WTC11 (cell line): ENCODE measurements at regions of chr17 and their contacts with region 1.

Region 1: GRCh38 chr17:29777663-29778062 is 152.4 kb downstream of the SSH2 start:
- DNase-seq: no peak
- ATAC-seq: no peak
- H3K4me3 Mint-ChIP-seq: no peak overlapping the region
- H3K27ac Mint-ChIP-seq: no peak overlapping the region
- H3K4me1 Mint-ChIP-seq: no peaks in the 10 kb centered on the region
- H3K27me3 Mint-ChIP-seq: no peaks in the 10 kb centered on the region
- CTCF ChIP-seq: no peak

Region 2: DNA sequence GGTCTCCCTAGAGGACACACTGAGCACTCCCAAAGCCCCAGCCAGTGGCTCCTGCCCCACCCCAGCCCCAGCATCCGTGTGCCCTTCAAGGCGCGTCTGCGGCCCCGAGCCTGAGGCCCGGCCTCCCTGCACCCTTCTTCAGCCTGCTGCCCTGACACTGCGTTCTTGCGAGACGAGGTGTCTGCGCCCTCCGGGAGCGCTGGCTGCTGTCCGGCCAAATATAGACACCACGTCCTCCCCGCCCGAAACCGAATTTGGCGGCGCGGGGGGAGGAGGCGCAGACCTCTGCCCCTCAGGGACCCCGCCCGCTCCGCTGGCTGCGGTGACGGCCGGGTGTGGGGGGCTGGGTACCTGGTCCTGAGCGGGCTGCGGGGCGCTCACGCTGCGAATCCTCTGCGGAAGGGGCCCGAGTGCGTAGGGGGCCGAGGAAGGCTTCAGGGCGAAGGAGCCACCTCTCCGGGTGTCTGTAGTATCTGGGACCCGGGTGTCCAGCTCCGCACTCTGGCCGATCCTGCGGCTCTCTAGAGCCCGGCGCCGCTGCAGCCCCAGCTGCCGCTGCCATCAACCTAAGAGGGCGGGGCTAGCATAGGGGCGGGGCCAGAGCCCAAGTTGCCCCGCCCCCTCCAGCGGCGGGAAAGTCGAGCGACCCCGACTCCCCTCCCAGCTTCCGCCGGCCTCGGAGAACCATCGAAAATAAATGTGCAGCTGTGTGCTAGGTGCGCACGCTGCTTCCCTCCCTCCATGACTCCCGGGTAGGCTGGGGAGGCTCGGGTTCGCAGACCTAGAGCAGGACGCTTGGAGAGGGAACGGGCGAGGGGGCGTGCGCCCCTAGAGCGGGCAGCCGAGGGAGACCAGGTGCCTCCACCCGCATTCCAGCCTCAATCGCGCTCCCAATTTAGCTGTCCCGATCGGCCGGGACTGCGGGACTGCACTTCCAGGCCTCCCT is 155.1 kb before region 1 on chr17 and contains the start of gene CORO6:
- CTCF ChIA-PET with region 1: interaction called, 34 read pairs
- POLR2A ChIA-PET with region 1: interaction called, 11 read pairs
- DNase-seq: peak; percentile 86
- ATAC-seq: peak; percentile 58
- H3K4me3 Mint-ChIP-seq: peak within 1 kb of the TSS; percentile 79
- H3K27ac Mint-ChIP-seq: peak within 1 kb of the TSS; percentile 82
- H3K4me1 Mint-ChIP-seq: peaks cover 48% of the 10 kb centered on the region
- H3K27me3 Mint-ChIP-seq: peaks cover 65% of the 10 kb centered on the region
- CTCF ChIP-seq: no peak
- total RNA-seq, gene CORO6: 6.4 to 8.9 TPM (median 7.5 TPM) in 3 replicates

Region 3: DNA sequence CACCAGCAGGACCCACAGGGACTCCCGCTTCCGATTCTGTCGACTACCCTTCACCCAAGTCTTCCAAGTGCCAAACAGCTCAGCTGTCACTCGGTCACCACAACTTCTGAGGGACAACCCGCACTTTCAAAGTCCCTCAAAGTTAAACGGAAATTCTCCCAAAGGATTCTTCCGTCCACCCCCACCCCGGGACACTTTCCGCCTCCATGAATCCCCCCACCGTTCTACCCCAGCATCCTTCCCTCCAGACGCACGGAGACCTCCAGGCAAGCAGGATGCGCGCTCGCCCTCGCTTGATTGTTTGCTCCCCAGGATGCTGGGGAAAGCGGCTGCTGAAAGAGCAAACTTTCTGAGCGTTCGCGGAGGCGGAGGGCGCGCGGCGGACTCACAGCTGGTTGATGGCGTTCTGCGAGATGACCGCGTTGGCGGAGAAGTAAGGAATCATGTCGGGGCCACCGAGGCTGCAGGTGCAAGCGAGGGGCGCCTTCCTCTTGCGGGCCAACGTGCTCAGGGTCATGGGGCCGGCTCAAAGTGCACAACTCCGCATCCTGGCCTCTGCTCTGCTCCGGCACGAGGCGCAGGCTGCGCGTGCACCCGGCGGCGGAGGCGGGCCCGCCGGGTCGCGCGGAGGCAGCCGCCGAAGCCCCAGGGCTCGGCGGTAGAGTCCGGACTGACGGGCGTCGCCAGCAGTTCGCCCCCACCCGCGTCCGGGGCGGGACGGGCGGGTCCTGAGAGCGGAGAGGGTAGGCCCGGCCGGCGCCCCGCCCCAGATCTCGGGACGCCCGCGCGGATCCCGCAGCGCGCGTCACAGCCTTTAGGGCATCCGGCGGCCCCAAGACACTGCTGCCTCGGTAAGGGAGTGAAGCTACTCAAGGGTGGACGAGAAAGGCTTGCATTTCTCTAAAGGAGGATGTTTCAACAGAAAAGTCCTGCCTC is 16.6 kb before region 1 on chr17:
- CTCF ChIA-PET with region 1: interaction called, 20 read pairs
- POLR2A ChIA-PET with region 1: interaction called, 4 read pairs
- DNase-seq: peak; percentile 77
- ATAC-seq: peak; percentile 89
- H3K4me3 Mint-ChIP-seq: peak overlapping the region; percentile 83
- H3K27ac Mint-ChIP-seq: no peak overlapping the region; the same call in 1 of the 2 replicates
- H3K4me1 Mint-ChIP-seq: peaks cover 14% of the 10 kb centered on the region
- H3K27me3 Mint-ChIP-seq: peaks cover 21% of the 10 kb centered on the region
- CTCF ChIP-seq: no peak

Region 4: GRCh38 chr17:29789196-29790170 is 11.8 kb after region 1 on chr17:
- CTCF ChIA-PET with region 1: interaction called, 10 read pairs
- POLR2A ChIA-PET with region 1: interaction called, 3 read pairs
- DNase-seq: no peak
- ATAC-seq: no peak; the same call in 1 of the 2 replicates
- H3K4me3 Mint-ChIP-seq: no peak overlapping the region
- H3K27ac Mint-ChIP-seq: no peak overlapping the region; the same call in 1 of the 2 replicates
- H3K4me1 Mint-ChIP-seq: peaks cover 40% of the 10 kb centered on the region
- H3K27me3 Mint-ChIP-seq: no peaks in the 10 kb centered on the region
- CTCF ChIP-seq: no peak

Region 5: DNA sequence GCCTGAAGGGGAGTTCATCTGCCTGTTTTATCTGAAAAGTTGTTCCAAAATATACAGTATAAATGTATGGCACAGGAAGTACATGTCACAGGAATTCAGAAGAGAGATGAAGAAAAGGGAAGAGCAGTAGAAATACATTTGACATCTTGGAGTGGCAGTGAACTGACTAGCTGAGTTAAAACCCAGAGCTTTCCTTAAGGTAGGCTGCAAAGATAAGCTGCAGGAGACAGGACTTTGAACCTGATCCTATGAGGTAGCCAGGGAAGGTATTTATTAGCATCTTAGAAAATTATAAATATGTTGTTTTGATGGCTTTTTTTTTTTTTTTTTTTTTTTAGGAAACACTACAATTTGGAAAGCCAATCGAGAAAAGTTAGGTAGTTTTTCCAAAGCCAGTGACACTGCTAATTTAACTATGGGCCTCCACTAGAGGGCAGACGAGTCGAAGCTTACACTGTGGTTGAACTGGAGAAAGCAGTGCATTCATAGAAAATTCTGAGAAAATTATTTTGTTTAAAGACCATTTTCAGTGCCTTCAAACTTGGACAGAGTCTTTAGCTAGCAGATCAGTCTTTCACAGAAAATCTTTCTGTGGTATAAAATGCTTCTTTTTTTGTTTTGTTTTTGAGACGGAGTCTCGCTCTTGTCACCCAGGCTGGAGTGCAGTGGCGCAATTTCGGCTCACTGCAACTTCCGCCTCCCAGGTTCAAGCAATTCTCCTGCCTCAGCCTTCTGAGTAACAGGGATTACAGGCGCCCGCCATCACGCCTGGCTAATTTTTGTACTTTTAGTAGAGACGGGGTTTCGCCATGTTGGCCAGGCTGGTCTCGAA is 30.1 kb after region 1 on chr17:
- CTCF ChIA-PET with region 1: interaction called, 11 read pairs
- POLR2A ChIA-PET with region 1: no interaction called
- DNase-seq: peak; percentile 62
- ATAC-seq: peak; percentile 65
- H3K4me3 Mint-ChIP-seq: no peak overlapping the region
- H3K27ac Mint-ChIP-seq: no peak overlapping the region
- H3K4me1 Mint-ChIP-seq: peaks cover 6% of the 10 kb centered on the region; the same call in 1 of the 2 replicates
- H3K27me3 Mint-ChIP-seq: no peaks in the 10 kb centered on the region
- CTCF ChIP-seq: peak; percentile 64

Region 6: GRCh38 chr17:30344283-30345088 is 566.8 kb after region 1 on chr17:
- CTCF ChIA-PET with region 1: no interaction called
- POLR2A ChIA-PET with region 1: no interaction called
- DNase-seq: no peak
- ATAC-seq: no peak
- H3K4me3 Mint-ChIP-seq: no peak overlapping the region
- H3K27ac Mint-ChIP-seq: no peak overlapping the region
- H3K4me1 Mint-ChIP-seq: peaks cover 14% of the 10 kb centered on the region
- H3K27me3 Mint-ChIP-seq: peaks cover 45% of the 10 kb centered on the region
- CTCF ChIP-seq: no peak